Activated CD4-positive, alpha-beta T cell treated with anti-CD3 and anti-CD28 coated beads for 36 hours (primary cell): ENCODE measurements at regions of chr1 and their contacts with region 1.

Region 1: DNA sequence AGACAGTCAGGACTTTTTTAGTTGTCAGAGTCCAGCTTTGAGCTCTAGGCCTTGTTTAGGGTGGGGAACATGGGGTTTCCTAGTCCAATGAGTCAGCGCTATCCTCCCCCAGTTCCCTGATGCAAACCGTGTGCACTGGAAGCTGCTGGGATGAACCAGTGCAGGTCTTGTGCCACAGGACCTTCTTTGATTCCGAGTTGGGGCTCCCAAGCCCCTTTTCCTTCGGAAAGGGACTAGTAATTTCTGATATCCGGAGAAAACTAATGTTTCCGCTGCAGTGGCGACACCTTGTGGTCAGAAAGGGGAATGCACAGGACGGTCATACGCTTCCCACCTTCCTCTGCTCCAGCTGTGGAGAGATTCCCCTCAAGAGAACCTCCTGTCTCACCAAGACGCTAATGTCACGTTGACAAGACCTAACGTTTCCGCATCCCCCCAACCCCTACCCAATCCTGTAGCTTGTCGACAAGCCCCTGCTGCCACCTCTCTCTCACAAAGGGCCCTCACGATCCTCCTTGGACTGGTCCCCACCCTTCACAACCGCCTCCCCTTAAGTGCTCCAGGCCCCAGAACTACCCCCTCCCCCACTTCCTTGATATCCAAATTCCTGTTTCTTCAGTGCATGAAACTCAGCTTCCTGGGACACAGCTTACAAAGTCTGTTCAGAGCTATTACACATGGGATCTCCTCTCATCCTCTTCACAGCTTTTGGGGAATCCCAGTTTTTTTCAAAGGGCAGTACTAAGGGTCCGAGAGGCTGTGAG is 30.9 kb downstream of the GPA33 start:
- DNase-seq: peak; percentile 85
- ATAC-seq: peak; percentile 55
- H3K4me3 Mint-ChIP-seq: no peak overlapping the region
- H3K27ac Mint-ChIP-seq: peak overlapping the region; percentile 61
- H3K4me1 Mint-ChIP-seq: peaks cover 7% of the 10 kb centered on the region
- H3K27me3 Mint-ChIP-seq: no peaks in the 10 kb centered on the region

Region 2: GRCh38 chr1:166838766-166839599 is 220.2 kb before region 1 on chr1 and contains the start of gene POGK:
- CTCF ChIA-PET with region 1: interaction called, 3 read pairs
- POLR2A ChIA-PET with region 1: no interaction called
- intact Hi-C with region 1: loop called in 1 of 2 experiments (anchors 5 kb)
- DNase-seq: peak; percentile 93
- ATAC-seq: peak; percentile 97
- H3K4me3 Mint-ChIP-seq: peak within 1 kb of the TSS; percentile 90
- H3K27ac Mint-ChIP-seq: peak within 1 kb of the TSS; percentile 98
- H3K4me1 Mint-ChIP-seq: peaks cover 56% of the 10 kb centered on the region
- H3K27me3 Mint-ChIP-seq: no peaks in the 10 kb centered on the region
- total RNA-seq, gene POGK: 36.2 to 40.6 TPM

Region 3: GRCh38 chr1:166875734-166876539 is 183.3 kb before region 1 on chr1 and contains the start of gene TADA1:
- CTCF ChIA-PET with region 1: interaction called, 42 read pairs
- POLR2A ChIA-PET with region 1: no interaction called
- intact Hi-C with region 1: loop called in 1 of 2 experiments (anchors 2 kb)
- DNase-seq: peak; percentile 100
- ATAC-seq: peak; percentile 91
- H3K4me3 Mint-ChIP-seq: peak within 1 kb of the TSS; percentile 92
- H3K27ac Mint-ChIP-seq: peak within 1 kb of the TSS; percentile 97
- H3K4me1 Mint-ChIP-seq: peaks cover 45% of the 10 kb centered on the region
- H3K27me3 Mint-ChIP-seq: no peaks in the 10 kb centered on the region
- total RNA-seq, gene TADA1: 16.0 to 19.5 TPM

Region 4: DNA sequence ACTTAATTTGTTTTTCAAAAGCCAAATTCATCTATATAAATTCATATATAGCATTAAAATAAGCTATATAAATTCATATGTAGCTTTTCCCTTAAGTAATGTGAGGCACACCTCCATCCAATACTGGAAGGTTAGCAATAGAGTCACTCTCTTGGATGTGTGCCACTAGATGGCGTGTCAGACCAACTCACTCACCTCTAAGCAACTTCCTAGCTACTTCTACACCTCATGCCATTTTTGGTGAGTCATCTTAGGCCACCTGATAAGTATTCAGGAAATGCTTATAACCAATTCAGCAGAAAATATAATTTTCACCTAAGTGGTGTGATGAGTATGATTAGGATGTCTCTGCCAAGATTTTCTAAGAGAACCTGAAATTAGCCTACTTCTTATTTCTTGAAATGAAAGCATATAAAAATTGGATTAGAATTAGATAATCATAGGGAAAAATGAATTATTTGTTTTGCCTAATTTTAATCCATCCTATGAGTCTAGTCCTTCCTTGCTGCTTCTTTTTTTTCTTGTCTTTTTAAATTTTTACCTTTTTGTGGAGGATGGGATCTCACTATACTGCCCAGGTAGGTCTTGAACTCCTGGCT is 148.7 kb before region 1 on chr1:
- CTCF ChIA-PET with region 1: interaction called, 541 read pairs
- POLR2A ChIA-PET with region 1: interaction called, 4 read pairs
- intact Hi-C with region 1: loop called (anchors 1 kb)
- DNase-seq: peak; percentile 87
- ATAC-seq: peak; percentile 96
- H3K4me3 Mint-ChIP-seq: no peak overlapping the region
- H3K27ac Mint-ChIP-seq: no peak overlapping the region
- H3K4me1 Mint-ChIP-seq: peaks cover 13% of the 10 kb centered on the region
- H3K27me3 Mint-ChIP-seq: no peaks in the 10 kb centered on the region

Region 5: GRCh38 chr1:166975361-166976129 is 83.7 kb before region 1 on chr1 and contains the start of gene ILDR2:
- CTCF ChIA-PET with region 1: interaction called, 8 read pairs
- POLR2A ChIA-PET with region 1: interaction called, 5 read pairs
- intact Hi-C with region 1: loop called (anchors 2 to 5 kb)
- DNase-seq: peak; percentile 87
- ATAC-seq: peak; percentile 60
- H3K4me3 Mint-ChIP-seq: peak within 1 kb of the TSS; percentile 93
- H3K27ac Mint-ChIP-seq: peak within 1 kb of the TSS; percentile 99
- H3K4me1 Mint-ChIP-seq: peaks cover 51% of the 10 kb centered on the region
- H3K27me3 Mint-ChIP-seq: peaks cover 21% of the 10 kb centered on the region
- total RNA-seq, gene ILDR2: 9.1 to 14.6 TPM

Region 6: GRCh38 chr1:167043752-167044488 is 15.3 kb before region 1 on chr1:
- CTCF ChIA-PET with region 1: interaction called, 21 read pairs
- POLR2A ChIA-PET with region 1: no interaction called
- intact Hi-C with region 1: no loop called
- DNase-seq: peak; percentile 89
- ATAC-seq: peak; percentile 99
- H3K4me3 Mint-ChIP-seq: peak overlapping the region; percentile 72
- H3K27ac Mint-ChIP-seq: peak overlapping the region; percentile 83
- H3K4me1 Mint-ChIP-seq: peaks cover 18% of the 10 kb centered on the region
- H3K27me3 Mint-ChIP-seq: peaks cover 7% of the 10 kb centered on the region

Region 7: DNA sequence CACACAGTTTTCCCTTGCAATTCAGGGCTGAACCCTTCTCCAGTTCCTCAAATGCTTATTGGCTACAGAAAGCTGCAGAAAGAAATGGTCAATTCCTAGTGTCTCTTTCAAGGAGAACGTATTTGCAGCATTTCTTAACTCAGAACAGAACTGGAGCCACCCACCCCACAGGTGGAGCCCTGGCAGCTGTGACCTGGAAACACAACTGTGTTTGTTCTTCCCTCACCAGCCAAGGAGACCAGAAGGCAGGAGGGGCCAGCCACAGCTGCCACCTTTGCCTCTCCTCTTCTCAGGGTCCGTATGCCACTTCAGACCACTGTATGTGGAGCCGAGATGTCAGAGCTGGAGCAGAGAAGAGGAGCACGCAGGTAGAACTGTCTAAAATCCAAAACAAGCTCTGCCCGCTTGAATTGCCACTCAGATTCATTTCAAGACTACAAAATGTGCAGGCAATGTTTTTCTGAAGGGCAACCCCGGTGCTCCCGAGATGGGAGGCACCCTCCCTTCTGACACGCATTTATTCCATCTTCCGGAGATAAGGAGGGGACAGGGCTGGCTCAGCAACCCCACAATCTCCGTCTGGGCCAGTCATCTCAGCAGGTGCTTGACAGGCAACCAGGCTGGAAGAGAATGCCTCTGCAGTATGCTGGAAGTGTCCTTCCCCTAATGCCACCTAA is 442.4 kb after region 1 on chr1:
- CTCF ChIA-PET with region 1: no interaction called
- POLR2A ChIA-PET with region 1: no interaction called
- intact Hi-C with region 1: no loop called
- DNase-seq: peak; percentile 82
- ATAC-seq: peak; percentile 60
- H3K4me3 Mint-ChIP-seq: peak overlapping the region; percentile 63
- H3K27ac Mint-ChIP-seq: peak overlapping the region; percentile 95
- H3K4me1 Mint-ChIP-seq: peaks cover 97% of the 10 kb centered on the region
- H3K27me3 Mint-ChIP-seq: no peaks in the 10 kb centered on the region